IMR-90 (cell line): ENCODE measurements at regions of chr3 and their contacts with region 1.

Region 1: GRCh38 chr3:186821429-186822367 is 15.4 kb upstream of the RFC4 start:
- DNase-seq: peak; percentile 83
- ATAC-seq: peak; percentile 69
- H3K4me3 ChIP-seq: peak overlapping the region; percentile 35; the same call in 1 of the 2 replicates
- H3K27ac ChIP-seq: peak overlapping the region; percentile 98
- H3K4me1 ChIP-seq: peaks cover 14% of the 10 kb centered on the region
- H3K27me3 ChIP-seq: no peaks in the 10 kb centered on the region
- CTCF ChIP-seq: peak; percentile 77
- POLR2A ChIP-seq: no peak
- RAD21 ChIP-seq: peak; percentile 73

Region 2: DNA sequence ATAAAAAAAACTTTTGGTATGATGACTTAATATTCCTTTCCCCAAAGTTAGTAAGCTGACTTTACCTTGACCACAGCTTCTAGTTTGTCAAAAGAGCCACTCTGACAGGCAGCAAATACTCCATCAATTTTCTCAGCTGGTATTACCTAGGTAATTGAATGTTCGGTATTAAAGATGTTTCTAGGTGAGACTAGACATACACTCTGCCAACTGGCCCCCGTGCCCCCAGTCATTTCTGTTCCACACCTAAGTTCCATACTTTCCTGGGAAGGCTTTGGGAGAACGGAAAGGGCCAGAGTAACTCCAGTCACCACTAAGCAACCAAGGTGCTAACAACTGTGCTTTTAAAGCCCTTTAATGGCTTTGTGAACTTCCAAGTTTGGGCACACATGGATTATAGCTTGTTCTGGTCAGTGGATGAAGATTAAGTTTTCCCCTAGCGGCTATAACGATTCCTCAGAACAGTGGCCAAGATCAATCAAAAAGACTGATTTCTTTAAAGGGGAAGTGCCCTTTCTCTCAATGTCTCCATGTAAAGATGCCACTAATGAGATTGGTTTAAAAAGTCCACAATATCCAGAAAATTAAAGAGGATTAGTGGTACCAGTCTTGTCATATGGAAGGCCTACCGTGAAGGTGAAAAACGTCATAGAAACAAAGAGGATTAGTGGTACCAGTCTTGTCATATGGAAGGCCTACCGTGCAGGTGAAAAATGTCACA is 31.3 kb before region 1 on chr3:
- CTCF ChIA-PET with region 1: interaction called, 5 read pairs
- POLR2A ChIA-PET with region 1: interaction called, 3 read pairs
- dilution Hi-C with region 1: no loop called
- in situ Hi-C with region 1: no loop called
- intact Hi-C with region 1: loop called (anchors 2 kb)
- DNase-seq: peak; percentile 61
- ATAC-seq: peak; percentile 45
- H3K4me3 ChIP-seq: no peak overlapping the region
- H3K27ac ChIP-seq: no peak overlapping the region
- H3K4me1 ChIP-seq: no peaks in the 10 kb centered on the region; the same call in 1 of the 2 replicates
- H3K27me3 ChIP-seq: no peaks in the 10 kb centered on the region
- CTCF ChIP-seq: no peak
- POLR2A ChIP-seq: peak; percentile 83
- RAD21 ChIP-seq: no peak

Region 3: DNA sequence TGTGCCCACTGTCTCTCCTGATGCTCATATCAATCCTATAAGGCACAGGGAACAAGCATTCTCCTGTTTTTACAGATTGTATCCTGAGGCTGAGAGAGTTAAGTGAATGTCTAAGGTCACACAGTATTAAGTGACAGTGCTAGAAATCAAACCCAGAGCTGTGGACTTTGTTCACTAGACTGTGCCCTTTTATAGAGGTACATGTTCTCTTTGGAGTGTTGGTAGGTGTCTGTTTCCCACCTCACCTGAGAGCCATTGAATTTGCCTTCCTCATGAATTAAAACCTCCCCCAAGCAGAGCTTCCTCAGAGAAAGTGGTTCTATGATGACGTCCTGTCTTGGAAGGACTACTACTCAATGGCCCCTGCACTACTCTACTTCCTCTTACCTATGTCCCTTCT is 33.3 kb after region 1 on chr3:
- CTCF ChIA-PET with region 1: no interaction called
- POLR2A ChIA-PET with region 1: no interaction called
- dilution Hi-C with region 1: no loop called
- in situ Hi-C with region 1: no loop called
- intact Hi-C with region 1: no loop called
- DNase-seq: no peak
- ATAC-seq: no peak
- H3K4me3 ChIP-seq: no peak overlapping the region
- H3K27ac ChIP-seq: no peak overlapping the region
- H3K4me1 ChIP-seq: no peaks in the 10 kb centered on the region
- H3K27me3 ChIP-seq: peaks cover 13% of the 10 kb centered on the region
- CTCF ChIP-seq: no peak
- POLR2A ChIP-seq: no peak
- RAD21 ChIP-seq: no peak

Region 4: DNA sequence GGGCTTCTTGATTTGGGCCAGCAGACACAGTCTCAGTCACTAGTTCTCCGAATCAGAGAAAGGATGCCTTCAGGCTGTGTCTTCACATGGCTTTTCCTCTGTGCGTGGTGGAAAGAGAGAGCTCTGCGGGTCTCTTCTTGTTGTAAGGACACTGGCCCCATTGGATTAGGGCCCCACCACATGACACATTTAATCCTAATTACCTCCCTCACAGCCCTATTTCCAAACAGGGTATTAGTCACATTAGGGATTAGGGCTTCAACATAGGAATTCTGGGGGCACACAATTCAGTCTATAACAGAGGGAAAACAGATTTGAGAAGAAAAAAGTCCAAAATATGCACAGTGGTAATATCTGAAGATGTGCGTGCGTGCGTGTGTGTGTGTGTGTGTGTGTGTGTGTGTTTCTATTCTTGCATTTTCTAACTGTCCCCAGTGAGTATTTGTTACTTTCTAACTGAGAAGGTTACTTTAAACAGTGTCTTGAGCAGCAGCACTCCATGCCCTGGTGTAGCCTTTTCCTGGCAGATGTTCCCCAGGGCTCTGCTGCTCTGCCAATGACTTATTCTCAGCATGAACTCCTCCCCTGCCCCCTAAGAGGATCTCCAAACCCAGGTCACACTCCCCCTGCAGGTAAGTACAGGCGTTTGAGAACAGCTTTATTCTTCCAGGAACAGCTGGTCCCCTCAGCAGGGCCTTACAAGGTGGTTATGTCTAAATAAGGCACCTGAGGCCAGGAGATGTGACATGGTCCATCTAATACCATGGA is 244.7 kb after region 1 on chr3:
- CTCF ChIA-PET with region 1: no interaction called
- POLR2A ChIA-PET with region 1: no interaction called
- dilution Hi-C with region 1: no loop called
- in situ Hi-C with region 1: no loop called
- intact Hi-C with region 1: no loop called
- DNase-seq: peak; percentile 11
- ATAC-seq: no peak
- H3K4me3 ChIP-seq: no peak overlapping the region
- H3K27ac ChIP-seq: no peak overlapping the region
- H3K4me1 ChIP-seq: peaks cover 14% of the 10 kb centered on the region
- H3K27me3 ChIP-seq: no peaks in the 10 kb centered on the region
- CTCF ChIP-seq: no peak
- POLR2A ChIP-seq: no peak
- RAD21 ChIP-seq: no peak